ENCODE measurements at regions of chr1 and their contacts with region 1.

Region 1: GRCh38 chr1:149917571-149918144 is at the start of gene SV2A:
- DNase-seq: peak in 1 of 2 donors; percentile 87
- H3K4me3 ChIP-seq: peak within 1 kb of the TSS; percentile 67 to 87
- H3K27ac ChIP-seq: peak within 1 kb of the TSS; percentile 75 to 78
- H3K4me1 ChIP-seq: peaks cover 0 to 11% of the 10 kb centered on the region in 2 donors
- H3K27me3 ChIP-seq: no peaks in the 10 kb centered on the region
- CTCF ChIP-seq: no peak
- total RNA-seq, gene SV2A: 5.9 TPM

Region 2: GRCh38 chr1:149886396-149887195 is 31.1 kb before region 1 on chr1:
- intact Hi-C with region 1: loop called (anchors 1 kb)
- DNase-seq: peak; percentile 82 to 96
- H3K4me3 ChIP-seq: peak overlapping the region; percentile 77 to 81
- H3K27ac ChIP-seq: peak overlapping the region; percentile 97 to 100
- H3K4me1 ChIP-seq: peaks cover 7 to 17% of the 10 kb centered on the region in 2 donors
- H3K27me3 ChIP-seq: no peaks in the 10 kb centered on the region
- CTCF ChIP-seq: no peak

Region 3: GRCh38 chr1:149899460-149900293 is 18.0 kb before region 1 on chr1 and contains the start of gene BOLA1:
- intact Hi-C with region 1: loop called (anchors 2 kb)
- DNase-seq: peak; percentile 75 to 96
- H3K4me3 ChIP-seq: peak within 1 kb of the TSS; percentile 66 to 70
- H3K27ac ChIP-seq: peak within 1 kb of the TSS; percentile 87 to 90
- H3K4me1 ChIP-seq: peaks cover 0 to 5% of the 10 kb centered on the region in 2 donors
- H3K27me3 ChIP-seq: no peaks in the 10 kb centered on the region
- CTCF ChIP-seq: no peak
- total RNA-seq, gene BOLA1: 36.7 TPM

Region 4: GRCh38 chr1:149927503-149928387 is 10.1 kb after region 1 on chr1 and contains the start of gene SF3B4:
- intact Hi-C with region 1: loop called (anchors 1 kb)
- DNase-seq: peak; percentile 82 to 98
- H3K4me3 ChIP-seq: peak within 1 kb of the TSS; percentile 72 to 85
- H3K27ac ChIP-seq: peak within 1 kb of the TSS; percentile 83 to 89
- H3K4me1 ChIP-seq: peaks cover 8 to 24% of the 10 kb centered on the region in 2 donors
- H3K27me3 ChIP-seq: no peaks in the 10 kb centered on the region
- CTCF ChIP-seq: no peak
- total RNA-seq, gene SF3B4: 87.3 TPM

Region 5: DNA sequence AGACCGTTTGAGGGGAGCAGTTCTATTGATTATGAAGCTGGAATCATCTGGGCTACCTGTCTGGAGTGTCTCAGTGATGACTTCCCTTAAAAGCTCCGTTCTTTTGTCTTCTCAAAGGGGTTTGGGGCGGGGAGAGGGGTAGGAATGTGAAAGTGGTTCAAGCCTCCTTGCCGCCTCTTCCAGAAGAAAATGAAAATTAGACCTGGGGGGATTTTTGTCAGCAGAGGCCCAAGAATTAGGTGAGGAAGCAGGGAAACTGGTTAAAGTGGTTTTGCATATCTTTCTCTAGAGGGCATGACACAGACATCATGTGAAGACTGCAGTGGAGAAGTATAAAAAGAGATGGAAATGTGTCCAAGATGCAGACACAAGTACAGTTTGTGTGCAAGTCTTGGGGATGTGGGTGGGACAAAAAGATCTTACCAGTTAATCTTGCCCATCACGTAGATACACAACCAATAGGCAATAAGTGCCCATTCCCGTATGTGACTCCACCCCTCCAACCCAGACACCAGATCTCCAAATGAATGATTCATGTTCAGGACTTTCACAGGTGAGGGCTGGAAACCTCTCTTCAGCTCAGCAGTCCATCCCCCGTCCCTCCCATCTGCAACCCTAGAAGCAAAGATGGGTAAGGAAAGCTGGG is 19.5 kb after region 1 on chr1:
- intact Hi-C with region 1: loop called (anchors 2 kb)
- DNase-seq: no peak
- H3K4me3 ChIP-seq: peak overlapping the region; percentile 74 to 93
- H3K27ac ChIP-seq: peak overlapping the region; percentile 82 to 96
- H3K4me1 ChIP-seq: peaks cover 5 to 27% of the 10 kb centered on the region in 2 donors
- H3K27me3 ChIP-seq: no peaks in the 10 kb centered on the region
- CTCF ChIP-seq: peak in 1 of 3 experiments; percentile 20